ENCODE measurements at regions of chr1 and their contacts with region 1.

Region 1: DNA sequence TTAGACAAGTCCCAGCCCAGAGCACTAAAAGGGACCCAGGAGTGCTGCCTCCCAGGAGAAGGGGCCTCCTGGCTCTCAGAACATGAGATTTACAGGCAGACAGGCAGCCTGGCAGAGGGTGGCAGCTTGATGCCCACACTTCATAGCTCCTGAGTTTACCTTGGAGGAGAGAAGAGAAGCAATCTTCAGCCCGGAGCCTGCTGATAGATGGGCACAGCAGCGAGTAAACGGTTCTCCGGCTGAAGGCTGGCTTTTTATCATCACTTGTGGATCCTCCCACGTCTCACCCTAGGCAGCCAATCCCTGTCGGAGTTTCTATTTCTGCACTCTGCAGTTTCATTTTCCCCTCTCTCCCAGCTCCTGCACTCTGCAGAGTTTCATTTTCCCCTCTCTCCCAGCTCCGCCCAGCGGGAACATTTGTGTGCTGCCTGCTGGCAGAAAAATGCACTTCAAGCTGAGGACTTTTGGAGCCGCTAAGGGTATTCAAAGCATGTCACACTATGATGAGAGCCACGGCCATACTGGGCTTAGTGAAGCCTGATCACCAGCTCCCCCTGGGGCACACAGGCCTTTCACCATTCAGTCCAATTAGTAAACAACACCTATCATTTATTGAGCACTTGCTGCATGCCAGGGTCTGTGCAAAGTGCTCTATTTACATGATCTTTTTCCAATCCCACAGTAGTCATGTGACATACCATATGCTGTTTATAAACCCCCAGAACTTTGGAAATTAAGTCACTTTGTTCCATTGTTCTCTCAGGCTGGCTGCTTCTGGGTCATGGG is at the start of gene IFI6:
- DNase-seq: peak; percentile 89
- H3K4me3 Mint-ChIP-seq: peak within 1 kb of the TSS; percentile 91
- H3K27ac Mint-ChIP-seq: peak within 1 kb of the TSS; percentile 84
- H3K4me1 Mint-ChIP-seq: peaks cover 29% of the 10 kb centered on the region
- H3K27me3 Mint-ChIP-seq: no peaks in the 10 kb centered on the region
- total RNA-seq, gene IFI6: 76.4 TPM

Region 2: GRCh38 chr1:27321813-27322577 is 350.2 kb before region 1 on chr1 and contains the start of gene TMEM222:
- CTCF ChIA-PET with region 1: no interaction called
- POLR2A ChIA-PET with region 1: no interaction called
- intact Hi-C with region 1: loop called (anchors 2 kb)
- DNase-seq: peak; percentile 98
- H3K4me3 Mint-ChIP-seq: peak within 1 kb of the TSS; percentile 96
- H3K27ac Mint-ChIP-seq: peak within 1 kb of the TSS; percentile 82
- H3K4me1 Mint-ChIP-seq: peaks cover 41% of the 10 kb centered on the region
- H3K27me3 Mint-ChIP-seq: no peaks in the 10 kb centered on the region
- total RNA-seq, gene TMEM222: 22.8 to 24.6 TPM

Region 3: GRCh38 chr1:27689423-27690173 is 17.4 kb after region 1 on chr1:
- CTCF ChIA-PET with region 1: interaction called, 13 read pairs
- POLR2A ChIA-PET with region 1: no interaction called
- intact Hi-C with region 1: no loop called
- DNase-seq: peak; percentile 40
- H3K4me3 Mint-ChIP-seq: no peak overlapping the region
- H3K27ac Mint-ChIP-seq: peak overlapping the region; percentile 51
- H3K4me1 Mint-ChIP-seq: peaks cover 16% of the 10 kb centered on the region
- H3K27me3 Mint-ChIP-seq: no peaks in the 10 kb centered on the region

Region 4: GRCh38 chr1:27725374-27726173 is 53.4 kb after region 1 on chr1 and contains the start of gene FAM76A:
- CTCF ChIA-PET with region 1: interaction called, 39 read pairs
- POLR2A ChIA-PET with region 1: interaction called, 10 read pairs
- intact Hi-C with region 1: loop called (anchors 2 kb)
- DNase-seq: peak; percentile 100
- H3K4me3 Mint-ChIP-seq: peak within 1 kb of the TSS; percentile 81
- H3K27ac Mint-ChIP-seq: peak within 1 kb of the TSS; percentile 79
- H3K4me1 Mint-ChIP-seq: peaks cover 16% of the 10 kb centered on the region
- H3K27me3 Mint-ChIP-seq: no peaks in the 10 kb centered on the region
- total RNA-seq, gene FAM76A: 8.1 to 11.8 TPM

Region 5: GRCh38 chr1:27736252-27736651 is 64.1 kb after region 1 on chr1:
- CTCF ChIA-PET with region 1: no interaction called
- POLR2A ChIA-PET with region 1: no interaction called
- intact Hi-C with region 1: no loop called
- DNase-seq: no peak
- H3K4me3 Mint-ChIP-seq: no peak overlapping the region
- H3K27ac Mint-ChIP-seq: no peak overlapping the region
- H3K4me1 Mint-ChIP-seq: no peaks in the 10 kb centered on the region
- H3K27me3 Mint-ChIP-seq: no peaks in the 10 kb centered on the region

Region 6: GRCh38 chr1:27830621-27831424 is 158.7 kb after region 1 on chr1 and contains the start of gene PPP1R8:
- CTCF ChIA-PET with region 1: interaction called, 10 read pairs
- POLR2A ChIA-PET with region 1: interaction called, 5 read pairs
- intact Hi-C with region 1: loop called (anchors 1 kb)
- DNase-seq: peak; percentile 94
- H3K4me3 Mint-ChIP-seq: peak within 1 kb of the TSS; percentile 92
- H3K27ac Mint-ChIP-seq: peak within 1 kb of the TSS; percentile 87
- H3K4me1 Mint-ChIP-seq: peaks cover 34% of the 10 kb centered on the region
- H3K27me3 Mint-ChIP-seq: no peaks in the 10 kb centered on the region
- total RNA-seq, gene PPP1R8: 42.9 to 43.8 TPM

Region 7: DNA sequence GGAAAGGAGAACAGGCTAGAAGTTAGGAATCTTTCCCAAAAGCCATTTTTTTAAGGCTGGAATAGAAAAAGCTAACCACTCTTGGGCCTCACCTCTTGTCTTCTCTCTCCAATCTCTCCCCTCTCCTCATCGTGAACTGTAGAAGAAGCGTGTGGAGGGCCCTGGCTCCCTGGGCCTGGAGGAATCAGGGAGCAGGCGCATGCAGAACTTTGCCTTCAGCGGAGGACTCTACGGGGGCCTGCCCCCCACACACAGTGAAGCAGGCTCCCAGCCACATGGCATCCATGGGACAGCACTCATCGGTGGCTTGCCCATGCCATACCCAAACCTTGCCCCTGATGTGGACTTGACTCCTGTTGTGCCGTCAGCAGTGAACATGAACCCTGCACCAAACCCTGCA is 177.8 kb after region 1 on chr1:
- CTCF ChIA-PET with region 1: no interaction called
- POLR2A ChIA-PET with region 1: no interaction called
- intact Hi-C with region 1: no loop called
- DNase-seq: no peak
- H3K4me3 Mint-ChIP-seq: no peak overlapping the region
- H3K27ac Mint-ChIP-seq: no peak overlapping the region
- H3K4me1 Mint-ChIP-seq: no peaks in the 10 kb centered on the region
- H3K27me3 Mint-ChIP-seq: no peaks in the 10 kb centered on the region

Region 8: GRCh38 chr1:27940297-27940696 is 268.1 kb after region 1 on chr1:
- CTCF ChIA-PET with region 1: no interaction called
- POLR2A ChIA-PET with region 1: no interaction called
- intact Hi-C with region 1: no loop called
- DNase-seq: peak; percentile 84
- H3K4me3 Mint-ChIP-seq: no peak overlapping the region
- H3K27ac Mint-ChIP-seq: peak overlapping the region; percentile 54
- H3K4me1 Mint-ChIP-seq: peaks cover 25% of the 10 kb centered on the region
- H3K27me3 Mint-ChIP-seq: peaks cover 7% of the 10 kb centered on the region

Measured in activated CD4-positive, alpha-beta memory T cell treated with anti-CD3 and anti-CD28 coated beads for 36 hours (primary cell).